Pancreas (tissue), 10 donors: ENCODE measurements at regions of chr13 and their contacts with region 1.

Region 1: GRCh38 chr13:37602747-37603381 is 4.3 kb upstream of the POSTN start:
- DNase-seq: no peak
- ATAC-seq: peak in 2 of 4 donors; percentile 44 to 57
- H3K4me3 ChIP-seq: no peak overlapping the region
- H3K27ac ChIP-seq: no peak overlapping the region
- H3K4me1 ChIP-seq: no peaks in the 10 kb centered on the region
- H3K27me3 ChIP-seq: no peaks in the 10 kb centered on the region
- CTCF ChIP-seq: peak in 3 of 4 donors; percentile 15 to 23 (median 20)

Region 2: DNA sequence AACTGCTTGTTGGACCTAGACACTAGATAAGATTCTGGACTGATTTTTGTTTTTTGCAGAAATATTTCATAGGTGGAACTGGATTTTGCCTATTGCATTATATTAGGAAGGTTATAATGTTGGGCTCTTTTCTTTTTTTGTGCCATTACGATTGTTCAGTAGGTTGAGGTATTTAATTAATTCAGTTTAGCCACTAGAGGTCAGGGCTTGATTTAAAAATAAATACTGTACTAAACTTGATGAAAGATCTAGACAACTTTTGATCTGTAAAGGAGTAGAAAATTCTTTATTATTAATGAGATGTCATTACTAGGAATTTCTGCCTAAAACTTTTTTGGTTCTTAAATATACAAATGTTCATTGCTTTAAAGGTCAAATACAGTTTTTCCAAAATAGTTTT is 528.2 kb before region 1 on chr13:
- intact Hi-C with region 1: loop called in 1 of 3 experiments (anchors 10 kb)
- DNase-seq: no peak
- ATAC-seq: peak in 3 of 4 donors; percentile 58 to 66 (median 58)
- H3K4me3 ChIP-seq: no peak overlapping the region
- H3K27ac ChIP-seq: no peak overlapping the region
- H3K4me1 ChIP-seq: no peaks in the 10 kb centered on the region
- H3K27me3 ChIP-seq: no peaks in the 10 kb centered on the region
- CTCF ChIP-seq: peak in 3 of 4 donors; percentile 3 to 37 (median 24)

Region 3: DNA sequence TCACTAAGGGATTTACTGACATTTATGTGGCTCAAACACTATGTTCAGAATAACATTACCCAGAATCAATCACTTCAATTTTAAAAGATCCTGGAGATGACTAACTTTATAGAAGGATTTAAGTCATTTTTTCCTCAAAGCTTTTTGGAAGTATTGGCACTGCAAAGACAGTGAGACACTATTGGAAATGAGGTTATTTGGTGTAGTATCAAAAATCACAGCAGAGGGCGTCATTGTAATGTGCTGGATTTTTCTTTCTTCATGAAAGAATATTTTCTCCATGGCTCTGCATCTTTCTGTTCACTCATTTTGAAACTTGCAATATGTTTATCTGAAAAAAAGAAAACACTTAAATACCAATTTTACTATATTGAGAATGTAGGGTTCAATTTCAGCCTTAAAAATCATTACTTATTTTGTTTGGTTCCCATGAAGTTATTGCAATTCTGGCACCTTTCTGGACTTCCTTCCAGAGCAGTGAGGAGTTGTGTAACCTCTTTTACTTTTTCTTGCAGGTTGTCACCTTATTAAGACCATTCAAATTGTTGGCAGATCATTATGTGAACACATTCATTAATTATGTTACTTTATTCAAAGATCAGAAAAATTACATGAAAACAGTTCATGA is 493.7 kb before region 1 on chr13:
- intact Hi-C with region 1: loop called in 1 of 3 experiments (anchors 10 kb)
- DNase-seq: no peak
- ATAC-seq: peak in 3 of 4 donors; percentile 62 to 70 (median 64)
- H3K4me3 ChIP-seq: no peak overlapping the region
- H3K27ac ChIP-seq: no peak overlapping the region
- H3K4me1 ChIP-seq: no peaks in the 10 kb centered on the region
- H3K27me3 ChIP-seq: peaks cover 0 to 4% (median 0%) of the 10 kb centered on the region in 4 donors
- CTCF ChIP-seq: peak in 3 of 4 donors; percentile 11 to 37 (median 30)